Activated CD8-positive, alpha-beta T cell treated with anti-CD3 and anti-CD28 coated beads for 36 hours (primary cell): ENCODE measurements at regions of chr2 and their contacts with region 1.

Region 1: DNA sequence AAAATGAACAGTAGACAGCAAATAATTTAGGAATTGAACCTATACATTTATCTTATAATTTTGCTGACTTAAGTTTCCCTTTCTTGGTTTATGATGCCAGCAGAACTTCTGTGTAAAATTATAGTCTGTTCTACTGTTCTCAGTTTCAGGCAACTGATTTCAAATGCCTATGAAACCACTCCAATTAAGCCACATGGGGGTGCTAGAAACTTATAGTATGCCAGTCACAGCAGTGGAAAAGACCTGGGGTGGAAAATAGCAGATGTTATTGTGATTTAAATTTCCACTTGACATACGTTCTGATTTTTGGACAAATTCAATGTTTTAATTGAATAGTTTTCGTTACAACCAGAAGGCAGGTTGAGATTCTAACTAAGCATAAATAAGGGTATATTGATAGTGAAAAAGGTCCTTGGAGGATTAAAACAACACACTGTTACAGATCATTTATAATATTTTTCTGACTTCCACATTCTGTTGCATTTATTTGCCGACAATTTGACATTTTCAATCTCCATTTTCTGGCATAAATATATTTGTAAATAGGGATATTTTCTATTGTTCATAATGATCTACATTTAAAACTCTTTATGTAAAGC is 61.4 kb downstream of the CPS1 start:
- DNase-seq: peak; percentile 9
- ATAC-seq: peak; percentile 39
- H3K4me3 Mint-ChIP-seq: no peak overlapping the region
- H3K27ac Mint-ChIP-seq: no peak overlapping the region
- H3K4me1 Mint-ChIP-seq: no peaks in the 10 kb centered on the region
- H3K27me3 Mint-ChIP-seq: no peaks in the 10 kb centered on the region
- CTCF ChIP-seq: peak; percentile 57

Region 2: GRCh38 chr2:211033765-211034164 is 415.9 kb after region 1 on chr2:
- CTCF ChIA-PET with region 1: no interaction called
- POLR2A ChIA-PET with region 1: no interaction called
- intact Hi-C with region 1: loop called (anchors 5 kb)
- DNase-seq: no peak
- ATAC-seq: no peak
- H3K4me3 Mint-ChIP-seq: no peak overlapping the region
- H3K27ac Mint-ChIP-seq: no peak overlapping the region
- H3K4me1 Mint-ChIP-seq: no peaks in the 10 kb centered on the region
- H3K27me3 Mint-ChIP-seq: no peaks in the 10 kb centered on the region
- CTCF ChIP-seq: no peak